ENCODE measurements at regions of chr7 and their contacts with region 1.

Region 1: DNA sequence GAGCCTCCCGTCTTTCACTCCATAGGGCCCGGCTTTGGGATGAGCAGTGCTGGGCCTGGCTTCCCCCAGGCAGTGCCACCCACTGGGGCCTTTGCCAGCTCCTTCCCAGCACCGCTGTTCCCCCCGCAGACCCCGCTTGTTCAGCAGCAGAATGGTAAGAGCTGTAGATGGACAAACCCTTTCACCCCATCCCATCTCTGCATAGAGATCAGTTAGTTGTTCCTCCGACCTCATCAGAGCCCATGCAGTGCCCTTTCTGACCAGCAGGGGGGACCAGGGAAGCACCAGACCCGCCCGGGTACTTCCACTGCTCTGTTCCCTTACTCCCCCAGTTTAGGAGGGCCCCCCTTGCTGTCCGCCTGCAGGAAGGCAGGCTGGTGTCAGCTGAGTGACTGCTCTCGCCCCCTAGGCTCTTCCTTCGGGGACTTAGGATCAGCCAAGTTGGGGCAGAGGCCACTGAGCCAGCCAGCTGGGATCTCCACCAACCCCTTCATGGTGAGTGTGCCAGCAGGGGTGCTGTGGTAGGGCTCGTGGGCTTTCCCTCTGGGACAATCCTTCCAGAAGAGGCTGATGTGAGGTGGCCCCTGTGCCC is 9.8 kb downstream of the SAP25 start:
- DNase-seq: peak; percentile 72
- H3K4me3 Mint-ChIP-seq: no peak overlapping the region
- H3K27ac Mint-ChIP-seq: no peak overlapping the region
- H3K4me1 Mint-ChIP-seq: peaks cover 10% of the 10 kb centered on the region
- H3K27me3 Mint-ChIP-seq: no peaks in the 10 kb centered on the region

Region 2: GRCh38 chr7:100469227-100470044 is 94.5 kb before region 1 on chr7:
- intact Hi-C with region 1: loop called (anchors 1 kb)
- DNase-seq: peak; percentile 69
- H3K4me3 Mint-ChIP-seq: no peak overlapping the region
- H3K27ac Mint-ChIP-seq: no peak overlapping the region
- H3K4me1 Mint-ChIP-seq: peaks cover 13% of the 10 kb centered on the region
- H3K27me3 Mint-ChIP-seq: no peaks in the 10 kb centered on the region

Region 3: DNA sequence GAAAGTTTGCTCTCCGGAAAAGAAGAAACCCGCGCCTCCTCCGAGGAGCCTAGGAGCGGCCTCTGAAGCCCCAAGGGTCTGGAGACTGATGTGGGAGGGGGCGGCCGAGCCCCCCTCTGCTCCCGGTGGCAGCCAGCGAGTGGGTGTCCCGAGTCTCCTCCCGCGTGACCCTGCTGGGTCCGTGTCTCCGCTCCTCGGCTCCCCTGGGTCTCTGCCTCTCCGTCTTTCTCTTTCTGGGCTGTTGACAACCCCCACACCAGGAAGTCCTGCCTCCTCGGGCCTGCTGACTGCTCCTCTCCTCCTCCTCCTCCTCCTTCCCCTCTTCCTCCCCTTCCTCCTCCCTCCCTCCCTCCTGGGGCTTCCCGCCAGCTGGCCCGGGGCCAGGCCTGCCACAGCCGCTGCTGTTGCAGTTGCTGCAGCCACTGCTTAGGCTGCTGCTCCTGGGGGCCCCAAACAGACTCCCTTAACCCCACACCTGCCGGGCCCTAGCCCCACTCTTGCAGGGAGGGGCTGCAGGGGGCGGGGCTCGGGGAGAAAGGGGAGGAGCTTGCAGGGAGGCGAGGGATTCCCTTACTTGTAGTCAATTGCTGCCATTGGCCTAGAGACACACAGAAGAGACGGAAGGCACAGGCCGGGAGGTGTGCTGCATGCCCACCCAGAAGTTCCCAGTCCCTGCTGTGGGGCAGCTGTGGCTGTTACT is 84.8 kb before region 1 on chr7 and contains the start of gene TSC22D4:
- intact Hi-C with region 1: loop called (anchors 2 kb)
- DNase-seq: peak; percentile 86
- H3K4me3 Mint-ChIP-seq: peak within 1 kb of the TSS; percentile 99
- H3K27ac Mint-ChIP-seq: peak within 1 kb of the TSS; percentile 88
- H3K4me1 Mint-ChIP-seq: peaks cover 26% of the 10 kb centered on the region
- H3K27me3 Mint-ChIP-seq: no peaks in the 10 kb centered on the region
- total RNA-seq, gene TSC22D4: 103 and 106 TPM in 2 replicates

Region 4: GRCh38 chr7:100545360-100546128 is 18.4 kb before region 1 on chr7:
- intact Hi-C with region 1: loop called (anchors 1 kb)
- DNase-seq: peak; percentile 36
- H3K4me3 Mint-ChIP-seq: peak overlapping the region; percentile 76
- H3K27ac Mint-ChIP-seq: peak overlapping the region; percentile 99
- H3K4me1 Mint-ChIP-seq: peaks cover 85% of the 10 kb centered on the region
- H3K27me3 Mint-ChIP-seq: no peaks in the 10 kb centered on the region

Region 5: GRCh38 chr7:100691676-100692577 is 128.0 kb after region 1 on chr7:
- intact Hi-C with region 1: loop called (anchors 5 kb)
- DNase-seq: peak; percentile 74
- H3K4me3 Mint-ChIP-seq: peak overlapping the region; percentile 90
- H3K27ac Mint-ChIP-seq: peak overlapping the region; percentile 0
- H3K4me1 Mint-ChIP-seq: peaks cover 23% of the 10 kb centered on the region
- H3K27me3 Mint-ChIP-seq: peaks cover 5% of the 10 kb centered on the region

Measured in activated T-helper 2 cell treated with anti-CD3 and anti-CD28 coated beads, Interferon-gamma antibody, Interleukin-2, Interleukin-4, amounts not matched to agents 10 μg/mL and 5 μg/mL and 100 μg/mL, durations not matched to agents 14 hours and 24 hours and 36 hours (primary cell).